ENCODE measurements at regions of chr11 and their contacts with region 1.

Region 1: GRCh38 chr11:66069715-66070603 is at the start of gene PACS1:
- DNase-seq: peak; percentile 87
- ATAC-seq: peak; percentile 77
- H3K4me3 Mint-ChIP-seq: peak within 1 kb of the TSS; percentile 91
- H3K27ac Mint-ChIP-seq: peak within 1 kb of the TSS; percentile 88
- H3K4me1 Mint-ChIP-seq: peaks cover 54% of the 10 kb centered on the region
- H3K27me3 Mint-ChIP-seq: no peaks in the 10 kb centered on the region
- total RNA-seq, gene PACS1: 96.6 to 104 TPM

Region 2: DNA sequence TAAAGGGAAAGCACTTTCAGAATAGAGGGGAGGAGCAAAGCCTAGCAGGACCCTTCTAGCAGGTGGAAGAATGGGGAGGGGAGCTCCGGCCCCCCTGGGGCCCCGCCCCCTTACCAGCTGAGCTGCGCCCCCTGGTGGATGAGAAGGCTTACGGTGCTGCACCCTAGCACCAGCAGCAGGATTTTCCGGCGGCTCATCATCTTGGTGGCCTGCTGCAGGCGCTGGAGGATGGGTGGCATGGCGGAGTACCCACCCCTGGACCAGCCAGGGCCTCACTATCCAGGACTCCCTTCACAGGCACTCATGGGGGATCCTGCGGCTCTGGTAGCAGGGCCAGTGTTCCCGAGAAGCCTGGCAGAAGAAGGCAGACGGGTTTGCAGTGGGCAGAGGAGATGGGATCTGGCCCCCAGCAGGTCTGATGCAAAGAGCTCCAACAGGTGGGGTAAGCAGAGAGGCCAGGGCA is 24.8 kb before region 1 on chr11:
- CTCF ChIA-PET with region 1: interaction called, 93 read pairs
- DNase-seq: peak; percentile 86
- ATAC-seq: peak; percentile 96
- H3K4me3 Mint-ChIP-seq: no peak overlapping the region
- H3K27ac Mint-ChIP-seq: no peak overlapping the region
- H3K4me1 Mint-ChIP-seq: peaks cover 17% of the 10 kb centered on the region
- H3K27me3 Mint-ChIP-seq: peaks cover 2% of the 10 kb centered on the region

Region 3: GRCh38 chr11:66081505-66081904 is 11.5 kb after region 1 on chr11:
- CTCF ChIA-PET with region 1: interaction called, 50 read pairs
- DNase-seq: peak; percentile 89
- ATAC-seq: peak; percentile 95
- H3K4me3 Mint-ChIP-seq: peak overlapping the region; percentile 69
- H3K27ac Mint-ChIP-seq: peak overlapping the region; percentile 97
- H3K4me1 Mint-ChIP-seq: peaks cover 57% of the 10 kb centered on the region
- H3K27me3 Mint-ChIP-seq: no peaks in the 10 kb centered on the region

Region 4: GRCh38 chr11:66112601-66113098 is 42.7 kb after region 1 on chr11:
- CTCF ChIA-PET with region 1: interaction called, 70 read pairs
- DNase-seq: no peak
- ATAC-seq: no peak
- H3K4me3 Mint-ChIP-seq: no peak overlapping the region
- H3K27ac Mint-ChIP-seq: peak overlapping the region; percentile 87
- H3K4me1 Mint-ChIP-seq: peaks cover 90% of the 10 kb centered on the region
- H3K27me3 Mint-ChIP-seq: no peaks in the 10 kb centered on the region

Region 5: DNA sequence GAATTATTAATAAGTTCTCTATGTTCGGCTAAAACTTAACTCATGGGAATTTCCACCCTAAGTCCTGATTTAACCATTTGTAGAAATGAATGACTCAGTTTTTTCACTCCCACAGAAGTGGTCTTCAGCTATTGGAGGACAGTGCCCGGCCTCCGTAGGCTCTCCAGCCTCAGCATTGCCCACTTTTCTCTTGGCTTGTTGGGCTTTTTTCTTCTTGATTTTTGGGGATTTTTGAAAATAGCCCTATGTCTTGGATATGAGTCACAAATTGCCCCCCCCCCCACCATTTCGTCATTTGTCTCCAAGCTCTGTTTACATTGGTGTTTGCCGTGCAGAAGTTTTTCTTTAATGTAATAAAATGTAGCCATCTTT is 66.8 kb after region 1 on chr11:
- CTCF ChIA-PET with region 1: interaction called, 95 read pairs
- DNase-seq: no peak
- ATAC-seq: no peak
- H3K4me3 Mint-ChIP-seq: no peak overlapping the region
- H3K27ac Mint-ChIP-seq: peak overlapping the region; percentile 43
- H3K4me1 Mint-ChIP-seq: peaks cover 37% of the 10 kb centered on the region
- H3K27me3 Mint-ChIP-seq: no peaks in the 10 kb centered on the region